ENCODE measurements at regions of chr7 and their contacts with region 1.

Region 1: DNA sequence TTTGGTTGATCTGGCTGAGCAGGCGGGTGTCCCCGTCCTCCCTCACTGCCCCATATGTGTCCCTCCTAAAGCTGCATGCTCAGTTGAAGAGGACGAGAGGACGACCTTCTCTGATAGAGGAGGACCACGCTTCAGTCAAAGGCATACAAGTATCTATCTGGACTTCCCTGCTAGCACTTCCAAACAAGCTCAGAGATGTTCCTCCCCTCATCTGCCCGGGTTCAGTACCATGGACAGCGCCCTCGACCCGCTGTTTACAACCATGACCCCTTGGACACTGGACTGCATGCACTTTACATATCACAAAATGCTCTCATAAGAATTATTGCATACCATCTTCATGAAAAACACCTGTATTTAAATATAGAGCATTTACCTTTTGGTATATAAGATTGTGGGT is 26.9 kb upstream of the TRIM56 start:
- DNase-seq: peak; percentile 81
- H3K4me3 ChIP-seq: no peak overlapping the region
- H3K27ac ChIP-seq: no peak overlapping the region
- H3K4me1 ChIP-seq: no peaks in the 10 kb centered on the region
- H3K27me3 ChIP-seq: no peaks in the 10 kb centered on the region
- CTCF ChIP-seq: no peak
- POLR2A ChIP-seq: no peak

Region 2: GRCh38 chr7:100894860-100895421 is 163.4 kb before region 1 on chr7:
- intact Hi-C with region 1: loop called (anchors 5 kb)
- DNase-seq: peak; percentile 58
- H3K4me3 ChIP-seq: peak overlapping the region; percentile 4 to 62
- H3K27ac ChIP-seq: peak overlapping the region in 1 of 2 donors; percentile 39
- H3K4me1 ChIP-seq: peaks cover 19% of the 10 kb centered on the region
- H3K27me3 ChIP-seq: no peaks in the 10 kb centered on the region
- CTCF ChIP-seq: peak; percentile 33 to 86 (median 73)
- POLR2A ChIP-seq: no peak

Region 3: DNA sequence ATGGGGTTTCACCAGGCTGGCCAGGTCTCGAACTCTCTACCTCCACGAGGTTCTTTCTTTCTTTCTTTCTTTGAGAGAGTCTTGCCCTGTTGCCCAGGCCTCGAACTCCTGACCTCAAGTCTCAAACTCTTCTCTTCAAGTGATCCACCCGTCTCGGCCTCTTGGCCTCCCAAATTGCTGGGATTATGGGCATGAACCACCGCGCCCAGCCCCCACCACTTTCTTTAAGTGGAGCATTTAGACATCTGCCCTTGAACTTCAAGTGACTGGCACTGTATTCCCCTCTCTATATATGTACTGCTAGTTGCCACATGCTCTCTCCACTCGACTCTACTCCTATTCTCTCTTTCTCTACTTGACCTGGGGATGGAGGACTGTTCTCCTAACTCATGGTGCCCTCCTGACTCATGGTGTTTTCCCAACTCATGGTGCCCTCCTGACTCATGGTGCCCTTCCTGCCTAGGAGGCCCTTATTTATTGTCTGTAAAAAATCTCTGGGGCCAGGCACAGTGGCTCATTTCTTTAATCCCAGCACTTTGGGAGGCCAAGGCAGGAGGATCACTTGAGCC is 143.4 kb before region 1 on chr7:
- intact Hi-C with region 1: loop called (anchors 5 kb)
- DNase-seq: no peak
- H3K4me3 ChIP-seq: no peak overlapping the region
- H3K27ac ChIP-seq: no peak overlapping the region
- H3K4me1 ChIP-seq: no peaks in the 10 kb centered on the region
- H3K27me3 ChIP-seq: no peaks in the 10 kb centered on the region
- CTCF ChIP-seq: no peak
- POLR2A ChIP-seq: no peak

Region 4: GRCh38 chr7:100965723-100966541 is 92.4 kb before region 1 on chr7:
- intact Hi-C with region 1: no loop called
- DNase-seq: peak; percentile 87
- H3K4me3 ChIP-seq: peak overlapping the region; percentile 36 to 48
- H3K27ac ChIP-seq: no peak overlapping the region
- H3K4me1 ChIP-seq: peaks cover 13% of the 10 kb centered on the region
- H3K27me3 ChIP-seq: peaks cover 16% of the 10 kb centered on the region
- CTCF ChIP-seq: peak; percentile 23 to 79 (median 75)
- POLR2A ChIP-seq: no peak

Region 5: GRCh38 chr7:101185258-101185839 is 127.0 kb after region 1 on chr7:
- intact Hi-C with region 1: no loop called
- DNase-seq: no peak
- H3K4me3 ChIP-seq: no peak overlapping the region
- H3K27ac ChIP-seq: no peak overlapping the region
- H3K4me1 ChIP-seq: no peaks in the 10 kb centered on the region
- H3K27me3 ChIP-seq: no peaks in the 10 kb centered on the region
- CTCF ChIP-seq: no peak
- POLR2A ChIP-seq: no peak